Activated CD4-positive, alpha-beta T cell treated with anti-CD3 and anti-CD28 coated beads for 36 hours (primary cell): ENCODE measurements at regions of chr7 and their contacts with region 1.

Region 1: GRCh38 chr7:150507947-150508602 is 6.6 kb upstream of the GIMAP7 start:
- DNase-seq: no peak
- ATAC-seq: peak; percentile 59
- H3K4me3 Mint-ChIP-seq: peak overlapping the region; percentile 64
- H3K27ac Mint-ChIP-seq: peak overlapping the region; percentile 86
- H3K4me1 Mint-ChIP-seq: peaks cover 95% of the 10 kb centered on the region
- H3K27me3 Mint-ChIP-seq: no peaks in the 10 kb centered on the region

Region 2: DNA sequence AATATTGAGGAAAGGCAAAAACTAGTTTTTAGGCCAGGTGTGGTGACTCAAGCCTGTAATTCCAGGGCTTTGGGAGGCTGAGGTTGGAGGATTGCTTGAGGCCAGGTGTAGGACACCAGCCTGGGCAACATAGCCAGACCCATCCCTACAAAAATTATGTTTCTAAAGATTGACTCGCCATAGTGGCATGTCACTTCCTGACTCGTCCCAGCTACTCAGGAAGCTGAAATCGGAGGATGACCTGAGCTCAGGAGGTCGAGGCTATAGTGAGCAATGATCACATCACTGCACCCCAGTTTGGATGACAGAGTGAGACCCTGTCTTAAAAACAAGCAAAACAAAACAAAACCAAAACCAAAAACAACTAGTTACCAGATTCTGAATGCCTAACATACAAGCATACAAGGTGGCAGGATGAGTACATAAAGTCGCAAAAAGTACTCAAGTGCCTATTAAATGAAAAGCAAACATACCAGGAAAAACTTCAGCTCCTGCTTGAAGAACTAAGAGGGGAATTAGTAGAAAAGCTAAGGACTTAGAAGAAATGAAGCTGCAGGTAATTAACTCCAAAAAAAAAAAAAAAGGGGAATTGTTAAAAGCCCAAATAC is 1346.7 kb before region 1 on chr7:
- CTCF ChIA-PET with region 1: no interaction called
- POLR2A ChIA-PET with region 1: no interaction called
- intact Hi-C with region 1: no loop called
- DNase-seq: peak; percentile 49
- ATAC-seq: peak; percentile 79
- H3K4me3 Mint-ChIP-seq: no peak overlapping the region
- H3K27ac Mint-ChIP-seq: peak overlapping the region; percentile 64
- H3K4me1 Mint-ChIP-seq: peaks cover 25% of the 10 kb centered on the region
- H3K27me3 Mint-ChIP-seq: no peaks in the 10 kb centered on the region

Region 3: DNA sequence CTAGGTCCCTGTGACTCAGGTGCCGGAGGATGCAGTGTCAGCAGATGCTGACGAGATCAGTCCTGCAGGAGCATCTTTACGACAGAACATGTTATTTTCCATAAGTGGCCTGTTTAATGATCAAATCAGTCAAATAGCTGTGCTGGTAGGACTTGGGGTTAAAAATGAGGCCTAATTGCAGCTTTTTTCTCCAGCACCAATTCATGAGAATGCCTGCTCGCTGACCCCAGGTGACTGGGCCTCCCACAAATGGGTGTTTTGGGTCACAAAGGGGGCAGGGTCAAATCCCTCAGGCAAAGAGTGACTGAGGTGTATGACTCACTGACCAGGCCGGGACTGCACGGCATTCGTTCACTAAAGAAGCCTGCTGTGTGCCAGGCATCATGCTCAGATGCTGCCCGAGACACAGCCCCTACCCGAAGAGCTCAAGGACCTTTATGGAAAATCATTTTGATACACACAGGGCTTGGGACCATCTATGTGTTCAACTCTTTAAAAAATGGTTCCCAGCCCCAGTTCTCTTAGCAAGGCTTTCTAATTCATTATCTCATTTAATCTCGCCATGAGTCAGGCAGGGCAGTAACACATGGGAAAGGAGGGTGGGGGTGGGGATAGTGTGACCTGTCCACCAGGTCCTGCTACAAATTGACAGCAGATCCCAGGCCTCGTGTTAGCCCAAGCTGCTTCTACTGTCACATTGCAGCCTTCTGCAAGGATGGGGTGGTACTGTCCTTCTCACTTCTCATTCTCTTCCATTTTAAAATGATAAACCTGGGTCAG is 107.9 kb before region 1 on chr7:
- CTCF ChIA-PET with region 1: no interaction called
- POLR2A ChIA-PET with region 1: no interaction called
- intact Hi-C with region 1: no loop called
- DNase-seq: no peak
- ATAC-seq: peak; percentile 11
- H3K4me3 Mint-ChIP-seq: no peak overlapping the region
- H3K27ac Mint-ChIP-seq: no peak overlapping the region
- H3K4me1 Mint-ChIP-seq: peaks cover 25% of the 10 kb centered on the region
- H3K27me3 Mint-ChIP-seq: no peaks in the 10 kb centered on the region

Region 4: DNA sequence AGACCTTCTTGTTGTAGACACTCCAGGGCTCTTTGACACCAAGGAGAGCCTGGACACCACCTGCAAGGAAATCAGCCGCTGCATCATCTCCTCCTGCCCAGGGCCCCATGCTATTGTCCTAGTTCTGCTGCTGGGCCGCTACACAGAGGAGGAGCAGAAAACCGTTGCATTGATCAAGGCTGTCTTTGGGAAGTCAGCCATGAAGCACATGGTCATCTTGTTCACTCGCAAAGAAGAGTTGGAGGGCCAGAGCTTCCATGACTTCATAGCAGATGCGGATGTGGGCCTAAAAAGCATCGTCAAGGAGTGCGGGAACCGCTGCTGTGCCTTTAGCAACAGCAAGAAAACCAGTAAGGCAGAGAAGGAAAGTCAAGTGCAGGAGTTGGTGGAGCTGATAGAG is 12.1 kb after region 1 on chr7:
- CTCF ChIA-PET with region 1: interaction called, 7 read pairs
- POLR2A ChIA-PET with region 1: interaction called, 13 read pairs
- intact Hi-C with region 1: loop called in 1 of 2 experiments (anchors 2 kb)
- DNase-seq: peak; percentile 63
- ATAC-seq: peak; percentile 38
- H3K4me3 Mint-ChIP-seq: peak overlapping the region; percentile 96
- H3K27ac Mint-ChIP-seq: peak overlapping the region; percentile 99
- H3K4me1 Mint-ChIP-seq: peaks cover 28% of the 10 kb centered on the region
- H3K27me3 Mint-ChIP-seq: no peaks in the 10 kb centered on the region

Region 5: GRCh38 chr7:150631866-150632864 is 124.1 kb after region 1 on chr7 and contains the start of gene GIMAP6:
- CTCF ChIA-PET with region 1: no interaction called
- POLR2A ChIA-PET with region 1: interaction called, 3 read pairs
- intact Hi-C with region 1: loop called in 1 of 2 experiments (anchors 5 kb)
- DNase-seq: peak; percentile 62
- ATAC-seq: peak; percentile 69
- H3K4me3 Mint-ChIP-seq: peak within 1 kb of the TSS; percentile 95
- H3K27ac Mint-ChIP-seq: peak within 1 kb of the TSS; percentile 97
- H3K4me1 Mint-ChIP-seq: peaks cover 65% of the 10 kb centered on the region
- H3K27me3 Mint-ChIP-seq: no peaks in the 10 kb centered on the region
- total RNA-seq, gene GIMAP6: 21.6 to 25.4 TPM

Region 6: DNA sequence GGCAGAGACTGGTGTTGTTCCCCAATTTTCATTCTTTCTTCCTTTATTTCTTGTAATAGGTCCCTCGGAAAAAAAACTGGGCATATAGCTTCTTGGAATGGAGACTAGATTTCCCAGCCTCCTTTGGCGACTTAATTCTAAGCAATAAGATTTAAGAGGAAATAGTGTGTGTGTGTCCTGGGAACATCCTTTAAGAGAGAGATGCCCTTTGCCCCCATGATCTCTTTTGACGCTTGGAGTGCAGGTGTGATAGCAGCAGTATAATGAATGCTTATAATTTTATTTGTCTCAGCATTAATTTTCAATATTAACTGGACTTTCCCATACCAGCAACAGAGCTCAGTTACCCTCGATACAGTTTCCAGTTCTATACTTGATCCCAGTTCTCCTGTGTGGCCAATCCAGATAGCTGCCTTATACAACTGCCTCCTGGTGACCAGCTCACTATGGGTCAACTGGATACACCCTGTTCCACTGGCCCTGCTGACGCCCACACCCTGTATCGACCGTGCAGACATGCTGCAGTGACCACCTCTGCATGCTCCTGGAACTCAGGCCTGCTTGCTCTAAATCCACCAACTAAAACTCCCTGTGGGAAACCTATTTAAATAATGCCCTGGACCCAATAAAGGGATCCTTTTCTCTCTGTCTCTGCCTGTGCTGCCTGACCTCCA is 306.4 kb after region 1 on chr7:
- CTCF ChIA-PET with region 1: no interaction called
- POLR2A ChIA-PET with region 1: no interaction called
- intact Hi-C with region 1: no loop called
- DNase-seq: no peak
- ATAC-seq: no peak
- H3K4me3 Mint-ChIP-seq: no peak overlapping the region
- H3K27ac Mint-ChIP-seq: no peak overlapping the region
- H3K4me1 Mint-ChIP-seq: no peaks in the 10 kb centered on the region
- H3K27me3 Mint-ChIP-seq: peaks cover 32% of the 10 kb centered on the region